ENCODE measurements at regions of chr14 and their contacts with region 1.

Region 1: DNA sequence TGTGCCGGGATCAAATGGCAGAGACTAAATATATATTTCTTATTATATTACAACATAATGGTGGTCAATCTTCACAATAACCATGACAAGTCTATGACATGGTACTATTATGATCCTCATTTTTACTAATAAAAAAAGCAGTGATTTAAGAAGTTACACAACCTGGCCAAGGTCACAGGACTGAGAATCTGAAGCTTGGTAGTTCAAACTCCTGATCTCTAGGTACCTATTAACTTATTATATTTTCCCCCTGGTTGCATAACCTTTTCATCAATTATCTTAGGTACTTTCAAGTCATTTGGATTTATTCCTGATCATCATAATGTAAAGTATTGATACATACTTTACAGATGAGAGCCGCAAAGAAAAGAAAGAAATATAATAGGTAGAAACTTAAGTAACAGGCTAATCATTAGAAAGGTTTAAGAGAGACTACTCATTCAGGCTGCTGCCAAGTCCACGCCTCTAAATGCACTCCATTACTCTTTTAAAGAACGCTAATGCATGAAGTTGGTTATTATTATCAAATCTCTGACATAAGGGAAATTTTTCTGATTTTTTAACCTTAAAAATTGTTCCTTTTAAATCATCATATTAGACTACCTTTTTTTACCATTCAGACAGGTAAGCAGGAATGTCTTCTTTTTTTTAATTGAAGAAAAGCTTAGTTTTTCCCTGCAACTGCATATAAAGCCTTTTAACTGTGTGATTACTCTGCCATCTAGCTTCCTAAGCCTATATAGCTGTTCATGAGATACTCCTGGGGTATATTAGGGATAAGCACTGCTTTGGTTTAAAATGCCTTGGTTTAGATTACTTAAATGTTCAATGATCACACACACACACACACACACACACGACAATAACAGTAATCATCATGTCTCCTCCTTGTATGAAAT is 35.6 kb downstream of the RPS29 start:
- DNase-seq: no peak
- ATAC-seq: no peak
- H3K4me3 ChIP-seq: no peak overlapping the region
- H3K27ac ChIP-seq: no peak overlapping the region
- H3K4me1 ChIP-seq: no peaks in the 10 kb centered on the region
- H3K27me3 ChIP-seq: no peaks in the 10 kb centered on the region
- CTCF ChIP-seq: no peak

Region 2: GRCh38 chr14:49483268-49483667 is 67.3 kb before region 1 on chr14:
- intact Hi-C with region 1: no loop called
- DNase-seq: no peak
- ATAC-seq: no peak
- H3K4me3 ChIP-seq: no peak overlapping the region
- H3K27ac ChIP-seq: no peak overlapping the region
- H3K4me1 ChIP-seq: no peaks in the 10 kb centered on the region
- H3K27me3 ChIP-seq: no peaks in the 10 kb centered on the region
- CTCF ChIP-seq: no peak

Region 3: DNA sequence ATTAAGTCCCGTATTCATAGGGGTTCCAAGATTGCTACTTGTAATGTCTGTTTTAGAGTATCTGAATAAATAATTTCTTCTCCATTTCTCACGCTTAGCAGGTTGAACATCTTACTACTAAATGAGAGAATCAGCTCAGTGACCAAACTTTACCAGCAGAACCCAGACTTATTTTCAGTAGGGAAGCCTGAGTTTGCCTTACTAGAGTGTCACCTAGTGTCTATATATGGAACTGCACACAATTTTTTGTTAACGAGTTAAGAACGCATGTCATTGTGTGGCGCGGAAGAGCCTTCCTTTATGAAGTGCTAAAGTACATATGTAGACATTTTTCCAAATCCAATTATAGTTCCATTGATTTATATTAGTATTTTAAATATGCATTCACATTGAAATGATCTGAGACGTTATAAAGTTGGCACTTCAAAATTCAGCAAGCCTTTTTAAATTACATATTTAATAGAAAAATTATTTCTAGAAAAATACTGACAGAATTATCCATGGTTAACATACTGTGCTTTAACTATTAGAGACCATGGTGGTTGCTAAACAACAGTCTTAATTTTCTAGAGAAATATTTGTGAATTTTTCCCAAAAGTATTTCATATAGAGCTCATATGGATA is 52.7 kb before region 1 on chr14:
- intact Hi-C with region 1: loop called (anchors 5 kb)
- DNase-seq: no peak
- ATAC-seq: peak; percentile 90
- H3K4me3 ChIP-seq: no peak overlapping the region
- H3K27ac ChIP-seq: no peak overlapping the region
- H3K4me1 ChIP-seq: no peaks in the 10 kb centered on the region
- H3K27me3 ChIP-seq: peaks cover 3% of the 10 kb centered on the region
- CTCF ChIP-seq: peak; percentile 90